H1 (cell line): ENCODE measurements at regions of chr9 and their contacts with region 1.

Region 1: DNA sequence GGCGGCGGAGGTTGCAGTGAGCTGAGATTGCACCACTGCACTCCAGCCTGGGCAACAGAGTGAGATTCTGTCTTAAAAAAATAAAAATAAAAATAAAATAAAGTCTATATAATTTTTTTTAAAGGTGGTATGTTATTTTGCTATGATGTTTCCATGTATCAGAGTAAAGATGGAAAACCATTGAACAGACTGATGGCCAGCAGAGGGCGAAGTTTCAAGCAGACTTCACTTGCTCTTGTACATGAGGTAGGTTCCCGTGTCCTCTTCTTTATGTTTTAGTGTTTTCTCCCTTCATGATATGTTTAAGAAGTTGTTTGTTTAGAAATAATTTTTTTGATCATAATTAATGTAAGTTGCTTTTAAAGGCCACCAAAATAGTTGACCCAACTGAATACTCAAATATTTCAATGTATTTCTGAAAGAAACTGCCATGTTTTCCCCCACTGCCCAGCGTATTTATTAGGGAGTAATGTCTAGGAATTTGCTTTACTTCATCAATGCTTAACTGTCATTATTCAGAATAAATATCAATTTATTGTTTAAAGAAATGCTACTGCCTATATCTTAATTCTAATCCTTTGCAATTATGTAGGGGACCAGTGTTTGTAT is 146.4 kb downstream of the HACD4 start:
- DNase-seq: peak; percentile 7 to 66
- H3K4me3 ChIP-seq: no peak overlapping the region
- H3K27ac ChIP-seq: no peak overlapping the region
- H3K4me1 ChIP-seq: no peaks in the 10 kb centered on the region
- H3K27me3 ChIP-seq: no peaks in the 10 kb centered on the region
- CTCF ChIP-seq: peak in 2 of 3 experiments; percentile 52 to 66; a peak in 3 of 4 replicates
- EP300 ChIP-seq: no peak
- POLR2A ChIP-seq: no peak
- RAD21 ChIP-seq: peak; percentile 45 to 53

Region 2: GRCh38 chr9:20872340-20872977 is 12.6 kb before region 1 on chr9:
- CTCF ChIA-PET with region 1: interaction called, 39 read pairs
- POLR2A ChIA-PET with region 1: interaction called, 5 read pairs
- DNase-seq: no peak
- H3K4me3 ChIP-seq: peak overlapping the region in 1 of 4 experiments; percentile 37; a peak in 1 of 8 replicates
- H3K27ac ChIP-seq: no peak overlapping the region
- H3K4me1 ChIP-seq: peaks cover 0 to 7% (median 5%) of the 10 kb centered on the region in 4 experiments; a peak in 5 of 7 replicates
- H3K27me3 ChIP-seq: no peaks in the 10 kb centered on the region
- CTCF ChIP-seq: no peak
- EP300 ChIP-seq: no peak
- POLR2A ChIP-seq: no peak
- RAD21 ChIP-seq: no peak

Region 3: GRCh38 chr9:20898885-20899554 is 13.9 kb after region 1 on chr9:
- CTCF ChIA-PET with region 1: interaction called, 18 read pairs
- POLR2A ChIA-PET with region 1: no interaction called
- DNase-seq: no peak
- H3K4me3 ChIP-seq: no peak overlapping the region
- H3K27ac ChIP-seq: no peak overlapping the region
- H3K4me1 ChIP-seq: no peaks in the 10 kb centered on the region
- H3K27me3 ChIP-seq: no peaks in the 10 kb centered on the region
- CTCF ChIP-seq: no peak
- EP300 ChIP-seq: no peak
- POLR2A ChIP-seq: no peak
- RAD21 ChIP-seq: no peak

Region 4: DNA sequence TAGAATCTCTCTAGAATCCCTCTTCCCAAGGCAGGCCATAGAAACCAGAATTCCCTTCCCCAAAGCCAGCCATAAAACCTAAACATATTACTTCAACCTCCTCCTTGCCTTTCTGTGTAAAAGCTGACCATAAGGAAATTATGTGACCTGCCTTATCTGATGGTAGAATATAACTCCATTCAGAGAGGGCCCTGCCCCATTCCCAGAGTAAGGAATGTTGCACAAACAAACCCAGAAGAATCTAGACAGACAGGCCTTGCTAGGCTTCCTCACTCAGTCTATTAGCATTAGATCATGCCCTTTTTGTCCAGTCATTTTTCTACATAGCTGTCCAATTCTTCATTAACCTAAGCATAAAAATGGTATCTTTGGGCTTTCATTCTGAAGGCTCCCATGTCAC is 210.5 kb after region 1 on chr9:
- CTCF ChIA-PET with region 1: no interaction called
- POLR2A ChIA-PET with region 1: no interaction called
- DNase-seq: no peak
- H3K4me3 ChIP-seq: no peak overlapping the region
- H3K27ac ChIP-seq: no peak overlapping the region
- H3K4me1 ChIP-seq: peaks cover 0 to 3% (median 0%) of the 10 kb centered on the region in 4 experiments; a peak in 1 of 7 replicates
- H3K27me3 ChIP-seq: no peaks in the 10 kb centered on the region
- CTCF ChIP-seq: no peak
- EP300 ChIP-seq: no peak
- POLR2A ChIP-seq: no peak
- RAD21 ChIP-seq: no peak

Region 5: GRCh38 chr9:21110708-21111576 is 225.9 kb after region 1 on chr9:
- CTCF ChIA-PET with region 1: interaction called, 27 read pairs
- POLR2A ChIA-PET with region 1: interaction called, 3 read pairs
- DNase-seq: no peak
- H3K4me3 ChIP-seq: no peak overlapping the region
- H3K27ac ChIP-seq: no peak overlapping the region
- H3K4me1 ChIP-seq: no peaks in the 10 kb centered on the region
- H3K27me3 ChIP-seq: no peaks in the 10 kb centered on the region
- CTCF ChIP-seq: peak in 2 of 3 experiments; percentile 74 to 86; a peak in 3 of 4 replicates
- EP300 ChIP-seq: no peak
- POLR2A ChIP-seq: no peak
- RAD21 ChIP-seq: peak; percentile 97